HepG2 (cell line): ENCODE measurements at regions of chr1 and their contacts with region 1.

Region 1: GRCh38 chr1:91830242-91831131 is 55.5 kb downstream of the TGFBR3 start:
- DNase-seq: peak; percentile 84
- ATAC-seq: peak; percentile 42
- H3K4me3 ChIP-seq: peak overlapping the region in 1 of 3 experiments; percentile 45; a peak in 2 of 6 replicates
- H3K27ac ChIP-seq: peak overlapping the region; percentile 97
- H3K4me1 ChIP-seq: peaks cover 100% of the 10 kb centered on the region
- H3K27me3 ChIP-seq: no peaks in the 10 kb centered on the region
- CTCF ChIP-seq: peak; percentile 45
- EP300 ChIP-seq: peak; percentile 47 to 77; a peak in 3 of 4 replicates
- POLR2A ChIP-seq: peak in 1 of 2 experiments; percentile 17; a peak in 2 of 4 replicates
- RAD21 ChIP-seq: no peak

Region 2: GRCh38 chr1:91500756-91501522 is 329.5 kb before region 1 on chr1 and contains the start of gene CDC7:
- CTCF ChIA-PET with region 1: no interaction called
- POLR2A ChIA-PET with region 1: no interaction called
- in situ Hi-C with region 1: no loop called
- intact Hi-C with region 1: loop called (anchors 5 kb)
- DNase-seq: peak; percentile 86
- ATAC-seq: peak; percentile 18
- H3K4me3 ChIP-seq: peak within 1 kb of the TSS; percentile 49 to 69 (median 51); a peak in 5 of 6 replicates
- H3K27ac ChIP-seq: peak within 1 kb of the TSS; percentile 81
- H3K4me1 ChIP-seq: peaks cover 23% of the 10 kb centered on the region
- H3K27me3 ChIP-seq: no peaks in the 10 kb centered on the region
- CTCF ChIP-seq: peak; percentile 53
- EP300 ChIP-seq: no peak
- POLR2A ChIP-seq: peak; percentile 14 to 19; a peak in 2 of 4 replicates
- RAD21 ChIP-seq: peak; percentile 35
- total RNA-seq, gene CDC7: 12.6 and 19.2 TPM in 2 replicates

Region 3: GRCh38 chr1:91699339-91699974 is 131.0 kb before region 1 on chr1:
- CTCF ChIA-PET with region 1: no interaction called
- POLR2A ChIA-PET with region 1: no interaction called
- in situ Hi-C with region 1: no loop called
- intact Hi-C with region 1: no loop called
- DNase-seq: no peak
- ATAC-seq: peak; percentile 31
- H3K4me3 ChIP-seq: no peak overlapping the region
- H3K27ac ChIP-seq: no peak overlapping the region
- H3K4me1 ChIP-seq: no peaks in the 10 kb centered on the region
- H3K27me3 ChIP-seq: no peaks in the 10 kb centered on the region
- CTCF ChIP-seq: no peak
- EP300 ChIP-seq: no peak
- POLR2A ChIP-seq: no peak
- RAD21 ChIP-seq: no peak

Region 4: DNA sequence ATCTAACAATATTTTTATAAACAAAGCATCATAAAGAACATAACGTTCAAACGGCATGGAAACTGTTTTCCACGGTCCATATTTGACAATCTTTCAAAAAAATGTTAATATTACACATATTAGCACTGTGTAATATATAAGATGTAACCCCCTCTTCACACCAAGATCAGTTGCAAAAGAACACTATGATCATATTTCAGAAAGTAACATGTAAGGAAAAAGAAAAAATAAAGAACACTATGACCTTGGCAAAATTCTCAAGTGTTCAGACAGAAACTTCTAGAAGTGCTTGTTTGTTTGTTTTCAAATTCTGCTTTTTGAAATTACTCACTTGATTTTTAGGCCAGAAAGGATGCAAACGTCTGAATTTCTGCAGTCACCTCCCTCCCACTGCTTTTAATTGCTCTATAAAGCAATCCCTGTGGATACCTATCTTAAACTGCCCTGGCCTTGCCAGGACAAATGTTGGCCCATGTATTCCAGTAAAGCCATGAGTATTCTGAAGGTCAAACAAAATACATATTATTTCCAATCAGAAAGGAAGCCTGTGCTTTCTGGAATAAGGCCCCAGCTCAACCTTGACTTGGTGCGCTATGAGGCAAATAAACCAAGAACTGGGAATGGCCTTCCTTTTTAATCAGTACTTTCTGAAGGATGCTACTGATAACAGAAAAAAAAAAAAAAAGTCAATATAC is 13.1 kb before region 1 on chr1:
- CTCF ChIA-PET with region 1: no interaction called
- POLR2A ChIA-PET with region 1: interaction called, 17 read pairs
- in situ Hi-C with region 1: no loop called
- intact Hi-C with region 1: no loop called
- DNase-seq: no peak
- ATAC-seq: peak; percentile 27; the same call in 1 of the 3 replicates
- H3K4me3 ChIP-seq: no peak overlapping the region
- H3K27ac ChIP-seq: peak overlapping the region; percentile 61
- H3K4me1 ChIP-seq: peaks cover 96% of the 10 kb centered on the region
- H3K27me3 ChIP-seq: no peaks in the 10 kb centered on the region
- CTCF ChIP-seq: no peak
- EP300 ChIP-seq: no peak
- POLR2A ChIP-seq: no peak
- RAD21 ChIP-seq: no peak

Region 5: DNA sequence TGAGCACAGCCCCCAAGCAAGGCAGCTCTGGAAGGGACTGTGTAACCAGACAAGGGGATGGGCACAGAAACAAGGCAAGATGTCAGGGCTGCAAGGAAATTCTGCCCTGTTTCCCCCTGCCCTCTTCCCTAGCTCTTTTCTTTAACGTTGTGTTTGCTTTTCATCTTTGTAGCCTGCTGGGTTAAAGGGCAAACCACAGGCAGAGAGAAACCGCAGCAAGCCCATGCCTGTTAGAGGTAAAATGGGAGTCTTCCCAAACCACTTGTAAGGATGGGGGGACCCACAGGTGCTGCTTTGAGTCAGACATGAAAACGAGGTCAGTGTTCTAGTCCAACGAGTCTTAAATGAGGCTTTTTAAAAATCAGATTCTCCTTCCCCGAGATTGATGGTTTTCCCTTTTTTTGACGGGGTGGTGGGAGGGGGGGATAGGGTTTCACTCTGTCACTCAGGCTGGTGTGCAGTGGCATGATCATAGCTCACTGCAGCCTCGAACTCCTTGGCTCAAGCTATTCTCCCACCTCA is 42.1 kb after region 1 on chr1:
- CTCF ChIA-PET with region 1: no interaction called
- POLR2A ChIA-PET with region 1: interaction called, 6 read pairs
- in situ Hi-C with region 1: no loop called
- intact Hi-C with region 1: loop called (anchors 2 kb)
- DNase-seq: peak; percentile 66
- ATAC-seq: peak; percentile 91
- H3K4me3 ChIP-seq: peak overlapping the region in 1 of 3 experiments; percentile 34; a peak in 3 of 6 replicates
- H3K27ac ChIP-seq: peak overlapping the region; percentile 45
- H3K4me1 ChIP-seq: peaks cover 94% of the 10 kb centered on the region
- H3K27me3 ChIP-seq: no peaks in the 10 kb centered on the region
- CTCF ChIP-seq: no peak
- EP300 ChIP-seq: peak in 1 of 2 experiments; percentile 58; a peak in 1 of 4 replicates
- POLR2A ChIP-seq: no peak
- RAD21 ChIP-seq: no peak

Region 6: DNA sequence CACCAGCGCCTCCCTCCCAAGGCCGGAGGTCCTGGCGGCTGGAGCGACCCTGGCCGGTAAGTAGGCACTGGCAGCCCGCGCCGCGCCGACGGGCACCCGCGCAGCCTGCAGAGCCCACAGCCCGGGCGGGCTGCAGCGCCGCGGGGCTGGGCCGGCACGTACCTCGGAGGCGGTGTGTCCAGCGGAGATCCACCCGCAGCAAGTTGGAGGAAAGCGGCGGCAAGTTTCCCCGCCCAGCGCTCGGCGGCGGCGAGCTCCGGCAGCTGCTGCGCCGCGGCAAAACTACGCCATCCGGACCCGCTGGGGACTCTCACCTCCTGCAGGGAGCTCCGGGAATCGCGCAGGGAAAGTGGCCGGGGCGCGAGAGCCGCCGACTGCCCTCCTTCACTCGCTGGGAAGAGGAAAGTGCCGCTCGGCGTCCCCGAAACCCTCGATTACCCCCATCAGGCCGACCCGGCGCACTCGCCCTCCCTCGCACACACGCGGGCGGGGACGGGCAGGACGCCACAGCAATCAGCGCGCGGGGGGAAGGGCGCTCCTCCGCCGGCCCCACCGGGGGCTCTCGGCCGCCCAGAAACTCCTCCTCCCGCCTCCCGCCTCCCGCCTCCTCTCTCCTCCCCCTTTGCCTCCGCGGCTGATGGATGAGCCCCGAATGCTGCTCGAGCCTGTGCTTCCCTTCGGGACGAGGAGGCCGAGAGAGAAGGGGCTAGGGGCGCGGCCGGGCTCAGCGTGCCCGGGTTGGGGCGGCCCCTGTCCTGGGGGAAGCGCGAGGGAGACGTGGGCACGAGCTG is 55.4 kb after region 1 on chr1 and contains the start of gene TGFBR3:
- CTCF ChIA-PET with region 1: no interaction called
- POLR2A ChIA-PET with region 1: interaction called, 26 read pairs
- in situ Hi-C with region 1: no loop called
- intact Hi-C with region 1: loop called (anchors 2 kb)
- DNase-seq: peak; percentile 70
- ATAC-seq: peak; percentile 83
- H3K4me3 ChIP-seq: peak within 1 kb of the TSS; percentile 87 to 100 (median 97)
- H3K27ac ChIP-seq: peak within 1 kb of the TSS; percentile 81
- H3K4me1 ChIP-seq: peaks cover 52% of the 10 kb centered on the region
- H3K27me3 ChIP-seq: peaks cover 0 to 4% of the 10 kb centered on the region in 2 experiments; a peak in 1 of 5 replicates
- CTCF ChIP-seq: peak; percentile 45
- EP300 ChIP-seq: peak in 1 of 2 experiments; percentile 38; a peak in 1 of 4 replicates
- POLR2A ChIP-seq: peak; percentile 67 to 80
- RAD21 ChIP-seq: peak; percentile 75
- total RNA-seq, gene TGFBR3: 44.8 and 76.5 TPM in 2 replicates

Region 7: GRCh38 chr1:92070892-92071291 is 240.4 kb after region 1 on chr1:
- CTCF ChIA-PET with region 1: no interaction called
- POLR2A ChIA-PET with region 1: no interaction called
- in situ Hi-C with region 1: no loop called
- intact Hi-C with region 1: no loop called
- DNase-seq: no peak
- ATAC-seq: no peak
- H3K4me3 ChIP-seq: no peak overlapping the region
- H3K27ac ChIP-seq: no peak overlapping the region
- H3K4me1 ChIP-seq: no peaks in the 10 kb centered on the region
- H3K27me3 ChIP-seq: no peaks in the 10 kb centered on the region
- CTCF ChIP-seq: no peak
- EP300 ChIP-seq: no peak
- POLR2A ChIP-seq: no peak
- RAD21 ChIP-seq: no peak